Head of caudate nucleus (tissue), 42 donors: ENCODE measurements at regions of chr4 and their contacts with region 1.

Region 1: DNA sequence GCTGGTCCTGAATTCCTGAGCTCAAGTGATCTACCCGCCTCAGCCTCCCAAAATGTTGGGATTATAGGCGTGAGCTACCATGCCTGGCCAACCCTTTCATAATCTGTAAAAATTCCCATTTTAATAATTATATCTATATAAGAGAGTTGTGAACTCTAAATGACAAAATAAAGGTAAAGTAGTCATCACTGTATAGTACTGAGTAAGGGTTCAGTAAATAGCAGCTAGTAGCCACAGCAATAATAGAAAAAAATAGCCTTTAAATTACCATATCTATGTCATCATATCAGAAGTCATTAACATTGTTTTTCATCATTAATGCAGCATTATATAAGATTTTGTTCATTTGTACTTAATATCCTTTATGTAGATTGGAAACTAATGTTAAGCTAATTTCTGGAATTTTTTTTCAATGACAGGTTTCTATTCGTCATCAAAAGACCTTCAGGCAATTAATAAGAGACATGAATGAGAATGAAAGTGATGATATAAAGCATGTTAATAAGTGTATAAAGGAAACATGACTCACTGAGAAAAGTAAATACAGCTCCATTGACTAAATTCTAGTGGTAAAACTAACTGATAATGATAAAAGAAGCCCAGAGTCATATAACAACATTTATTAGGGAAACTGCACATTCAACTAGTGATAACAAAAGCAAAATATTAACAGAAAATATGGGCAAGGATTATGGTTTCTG is 85.9 kb upstream of the UGT8 start:
- DNase-seq: no peak

Region 2: GRCh38 chr4:114659386-114660008 is 146.8 kb after region 1 on chr4:
- intact Hi-C with region 1: loop called (anchors 5 kb)
- DNase-seq: peak; percentile 53 to 93 (median 82)

Region 3: GRCh38 chr4:115076691-115077090 is 563.9 kb after region 1 on chr4:
- intact Hi-C with region 1: no loop called
- DNase-seq: no peak